Endothelial cell of umbilical vein (primary cell): ENCODE measurements at regions of chr22 and their contacts with region 1.

Region 1: GRCh38 chr22:27331526-27332281 is 469.9 kb downstream of the MN1 start:
- DNase-seq: peak; percentile 62
- H3K4me3 ChIP-seq: no peak overlapping the region
- H3K27ac ChIP-seq: no peak overlapping the region
- H3K4me1 ChIP-seq: no peaks in the 10 kb centered on the region
- H3K27me3 ChIP-seq: peaks cover 5 to 6% of the 10 kb centered on the region in 2 experiments
- CTCF ChIP-seq: peak; percentile 27 to 76
- POLR2A ChIP-seq: no peak

Region 2: GRCh38 chr22:26756675-26757293 is 574.9 kb before region 1 on chr22:
- CTCF ChIA-PET with region 1: interaction called, 6 read pairs
- POLR2A ChIA-PET with region 1: no interaction called
- dilution Hi-C with region 1: no loop called
- intact Hi-C with region 1: loop called (anchors 2 kb)
- DNase-seq: peak; percentile 46
- H3K4me3 ChIP-seq: peak overlapping the region in 2 of 3 experiments; percentile 13 to 29
- H3K27ac ChIP-seq: no peak overlapping the region
- H3K4me1 ChIP-seq: peaks cover 5% of the 10 kb centered on the region
- H3K27me3 ChIP-seq: no peaks in the 10 kb centered on the region
- CTCF ChIP-seq: peak; percentile 75 to 88
- POLR2A ChIP-seq: no peak

Region 3: DNA sequence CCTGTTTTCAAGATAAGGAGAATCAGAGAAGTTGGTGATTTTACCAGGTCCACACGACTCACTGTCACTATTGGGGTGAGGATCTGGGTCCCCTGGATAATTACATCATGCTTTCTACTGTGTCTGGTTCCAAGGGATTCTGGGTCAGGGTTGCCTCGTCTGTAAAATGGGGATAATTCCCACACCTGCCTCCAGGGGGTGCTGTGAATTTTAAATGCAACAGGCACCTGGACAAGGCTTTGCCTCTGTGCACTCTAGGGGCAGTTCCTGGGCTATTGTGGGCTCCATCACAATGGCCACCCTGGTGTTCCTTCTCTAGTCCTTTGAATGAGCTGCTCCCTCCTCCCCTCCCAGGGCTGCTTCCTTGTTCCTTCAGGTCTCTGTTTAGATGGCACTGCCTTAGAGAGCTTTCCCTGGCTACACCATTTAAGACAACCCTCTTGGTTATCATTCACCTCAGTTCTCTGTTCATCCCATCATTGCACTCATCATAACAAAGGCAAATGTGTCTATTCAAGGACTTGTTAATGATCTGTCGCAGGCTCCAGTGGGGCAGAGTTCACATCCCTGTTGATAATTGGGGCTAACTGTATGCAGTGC is 495.7 kb before region 1 on chr22:
- CTCF ChIA-PET with region 1: interaction called, 5 read pairs
- POLR2A ChIA-PET with region 1: no interaction called
- dilution Hi-C with region 1: no loop called
- intact Hi-C with region 1: loop called (anchors 1 kb)
- DNase-seq: peak; percentile 42
- H3K4me3 ChIP-seq: no peak overlapping the region
- H3K27ac ChIP-seq: no peak overlapping the region
- H3K4me1 ChIP-seq: no peaks in the 10 kb centered on the region
- H3K27me3 ChIP-seq: no peaks in the 10 kb centered on the region
- CTCF ChIP-seq: peak; percentile 51 to 71
- POLR2A ChIP-seq: no peak

Region 4: GRCh38 chr22:26852176-26852575 is 479.5 kb before region 1 on chr22:
- CTCF ChIA-PET with region 1: no interaction called
- POLR2A ChIA-PET with region 1: no interaction called
- dilution Hi-C with region 1: no loop called
- intact Hi-C with region 1: no loop called
- DNase-seq: no peak
- H3K4me3 ChIP-seq: no peak overlapping the region
- H3K27ac ChIP-seq: no peak overlapping the region
- H3K4me1 ChIP-seq: no peaks in the 10 kb centered on the region
- H3K27me3 ChIP-seq: peaks cover 2 to 5% of the 10 kb centered on the region in 2 experiments
- CTCF ChIP-seq: no peak
- POLR2A ChIP-seq: no peak

Region 5: GRCh38 chr22:27345142-27346090 is 13.7 kb after region 1 on chr22:
- CTCF ChIA-PET with region 1: interaction called, 16 read pairs
- POLR2A ChIA-PET with region 1: no interaction called
- dilution Hi-C with region 1: no loop called
- intact Hi-C with region 1: no loop called
- DNase-seq: no peak
- H3K4me3 ChIP-seq: no peak overlapping the region
- H3K27ac ChIP-seq: no peak overlapping the region
- H3K4me1 ChIP-seq: no peaks in the 10 kb centered on the region
- H3K27me3 ChIP-seq: peaks cover 8 to 16% of the 10 kb centered on the region in 2 experiments
- CTCF ChIP-seq: no peak
- POLR2A ChIP-seq: no peak